Activated CD4-positive, alpha-beta T cell treated with anti-CD3 and anti-CD28 coated beads for 36 hours (primary cell): ENCODE measurements at regions of chr1 and their contacts with region 1.

Region 1: DNA sequence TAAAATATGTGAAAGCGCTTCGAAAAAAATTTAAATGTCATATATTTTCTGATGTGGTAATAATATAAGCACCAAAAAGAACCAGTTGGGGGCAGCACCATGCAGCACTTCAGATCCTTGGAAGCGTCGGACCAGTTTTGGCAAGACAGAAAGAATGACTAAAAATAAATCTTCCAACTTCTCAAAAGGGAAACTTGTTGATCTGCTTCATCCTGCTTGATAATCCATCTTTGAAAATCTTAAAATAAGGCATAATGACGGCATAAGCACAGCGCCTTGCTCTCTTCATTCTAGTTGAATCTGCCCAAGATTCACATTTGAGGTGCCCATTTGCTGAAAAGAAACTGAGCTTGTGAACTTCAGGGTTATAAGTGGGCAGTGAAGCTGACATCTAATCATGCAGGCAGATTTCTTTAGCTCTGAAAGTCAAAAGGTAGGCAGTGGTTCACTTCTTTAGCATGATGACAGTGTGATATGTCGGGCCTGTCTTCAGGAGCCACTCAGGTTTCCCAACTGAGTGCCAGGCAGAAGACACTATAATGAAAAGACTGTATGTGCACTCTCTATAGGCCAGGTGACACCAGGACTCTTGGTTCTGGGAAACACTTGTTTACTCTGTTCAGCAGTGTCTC is 19.8 kb upstream of the MUTYH start:
- DNase-seq: peak; percentile 76
- ATAC-seq: peak; percentile 79
- H3K4me3 Mint-ChIP-seq: no peak overlapping the region
- H3K27ac Mint-ChIP-seq: peak overlapping the region; percentile 4
- H3K4me1 Mint-ChIP-seq: peaks cover 11% of the 10 kb centered on the region
- H3K27me3 Mint-ChIP-seq: no peaks in the 10 kb centered on the region

Region 2: GRCh38 chr1:45348716-45349677 is 11.0 kb before region 1 on chr1:
- CTCF ChIA-PET with region 1: interaction called, 12 read pairs
- POLR2A ChIA-PET with region 1: interaction called, 3 read pairs
- intact Hi-C with region 1: no loop called
- DNase-seq: no peak
- ATAC-seq: peak; percentile 60
- H3K4me3 Mint-ChIP-seq: no peak overlapping the region
- H3K27ac Mint-ChIP-seq: peak overlapping the region; percentile 45
- H3K4me1 Mint-ChIP-seq: peaks cover 4% of the 10 kb centered on the region
- H3K27me3 Mint-ChIP-seq: no peaks in the 10 kb centered on the region

Region 3: DNA sequence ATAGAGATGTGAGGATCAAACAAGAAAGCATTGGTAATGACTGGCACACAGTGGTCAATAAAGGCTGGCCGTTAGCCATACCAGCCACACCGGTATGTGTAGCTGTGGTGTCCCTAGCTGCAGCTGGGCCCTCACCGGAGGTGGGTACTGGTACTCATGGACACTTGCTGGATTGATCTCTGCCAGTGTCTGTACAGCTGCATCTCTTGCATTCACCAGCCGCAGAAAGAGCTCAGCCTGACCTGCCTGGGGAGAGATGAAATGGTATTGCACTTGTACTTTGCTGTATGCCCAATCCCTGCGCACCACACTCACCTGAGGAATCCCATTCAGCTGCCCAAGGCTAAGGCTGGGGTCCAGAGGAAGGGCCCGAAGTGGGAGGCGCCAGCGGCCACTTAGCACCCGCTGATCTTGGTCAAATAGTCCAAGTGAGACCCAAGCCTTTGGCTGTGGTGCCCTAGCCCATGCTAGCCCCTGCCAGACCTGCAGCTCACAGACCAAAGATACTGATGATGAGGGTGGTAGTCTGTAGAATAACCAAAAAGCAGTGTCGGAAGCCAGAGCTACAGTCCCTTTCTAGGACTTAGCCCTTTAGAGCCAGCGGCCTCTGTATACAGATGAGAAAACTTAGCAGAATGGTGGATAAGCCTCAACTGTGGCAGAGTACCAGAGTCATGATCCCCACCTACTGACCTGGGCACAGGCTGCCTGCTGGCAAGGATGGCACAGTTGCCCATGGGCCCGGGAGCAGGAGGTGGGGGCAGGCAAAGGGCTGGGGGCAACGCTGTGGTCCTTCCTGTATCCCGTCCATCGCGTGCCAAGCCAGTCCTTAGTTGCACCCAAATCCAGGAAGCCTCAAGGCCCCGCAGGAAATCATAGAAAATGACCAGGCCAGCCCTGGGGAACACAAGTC is 260.8 kb after region 1 on chr1:
- CTCF ChIA-PET with region 1: no interaction called
- POLR2A ChIA-PET with region 1: no interaction called
- intact Hi-C with region 1: no loop called
- DNase-seq: no peak
- ATAC-seq: no peak
- H3K4me3 Mint-ChIP-seq: no peak overlapping the region
- H3K27ac Mint-ChIP-seq: no peak overlapping the region
- H3K4me1 Mint-ChIP-seq: no peaks in the 10 kb centered on the region
- H3K27me3 Mint-ChIP-seq: no peaks in the 10 kb centered on the region